ENCODE measurements at regions of chr20 and their contacts with region 1.

Region 1: GRCh38 chr20:1212607-1213396 is 9.5 kb downstream of the C20orf202 start:
- DNase-seq: peak; percentile 74
- H3K4me3 Mint-ChIP-seq: no peak overlapping the region
- H3K27ac Mint-ChIP-seq: no peak overlapping the region
- H3K4me1 Mint-ChIP-seq: peaks cover 20% of the 10 kb centered on the region
- H3K27me3 Mint-ChIP-seq: peaks cover 58% of the 10 kb centered on the region
- CTCF ChIP-seq: peak; percentile 78

Region 2: DNA sequence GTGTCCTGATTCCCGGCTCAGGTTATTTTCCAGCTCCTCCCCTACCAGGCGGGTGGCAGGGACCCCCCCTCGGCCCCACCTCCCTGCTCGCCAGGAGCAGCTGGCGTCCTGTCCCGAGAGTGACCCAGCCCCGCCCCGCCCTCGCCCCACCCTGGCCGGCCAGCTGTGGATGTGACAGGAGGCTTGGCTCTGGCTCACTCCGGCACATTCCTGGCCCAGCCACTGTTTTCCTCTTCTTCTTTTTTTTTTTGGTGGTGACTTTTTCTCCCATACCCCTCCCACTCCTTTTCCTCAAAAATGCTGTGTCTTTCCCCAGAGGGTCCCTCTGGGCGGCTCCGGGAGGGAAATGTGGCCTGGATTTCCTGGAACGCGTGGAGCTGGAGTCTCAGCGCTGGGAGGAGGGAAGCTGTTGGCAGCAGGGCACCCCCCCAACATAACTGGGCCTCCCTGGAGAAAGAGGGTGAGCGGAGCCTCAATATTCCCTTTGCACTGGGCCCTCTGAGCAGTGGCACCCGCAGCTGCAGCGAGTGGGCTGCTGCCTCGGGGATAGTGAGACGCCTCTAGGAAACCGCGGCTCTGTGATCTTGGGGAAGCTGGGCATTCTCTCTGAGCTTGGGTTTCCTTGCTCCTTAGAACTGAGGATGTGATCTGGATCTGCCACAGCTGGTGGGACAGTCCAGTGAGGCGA is 640.9 kb before region 1 on chr20:
- CTCF ChIA-PET with region 1: no interaction called
- POLR2A ChIA-PET with region 1: no interaction called
- intact Hi-C with region 1: no loop called
- DNase-seq: no peak
- H3K4me3 Mint-ChIP-seq: no peak overlapping the region
- H3K27ac Mint-ChIP-seq: no peak overlapping the region
- H3K4me1 Mint-ChIP-seq: peaks cover 12% of the 10 kb centered on the region
- H3K27me3 Mint-ChIP-seq: peaks cover 59% of the 10 kb centered on the region
- CTCF ChIP-seq: no peak

Region 3: GRCh38 chr20:1185790-1186334 is 26.9 kb before region 1 on chr20:
- CTCF ChIA-PET with region 1: interaction called, 14 read pairs
- POLR2A ChIA-PET with region 1: interaction called, 10 read pairs
- intact Hi-C with region 1: no loop called
- DNase-seq: peak; percentile 40
- H3K4me3 Mint-ChIP-seq: peak overlapping the region; percentile 45
- H3K27ac Mint-ChIP-seq: no peak overlapping the region
- H3K4me1 Mint-ChIP-seq: no peaks in the 10 kb centered on the region
- H3K27me3 Mint-ChIP-seq: peaks cover 28% of the 10 kb centered on the region
- CTCF ChIP-seq: peak; percentile 72

Region 4: DNA sequence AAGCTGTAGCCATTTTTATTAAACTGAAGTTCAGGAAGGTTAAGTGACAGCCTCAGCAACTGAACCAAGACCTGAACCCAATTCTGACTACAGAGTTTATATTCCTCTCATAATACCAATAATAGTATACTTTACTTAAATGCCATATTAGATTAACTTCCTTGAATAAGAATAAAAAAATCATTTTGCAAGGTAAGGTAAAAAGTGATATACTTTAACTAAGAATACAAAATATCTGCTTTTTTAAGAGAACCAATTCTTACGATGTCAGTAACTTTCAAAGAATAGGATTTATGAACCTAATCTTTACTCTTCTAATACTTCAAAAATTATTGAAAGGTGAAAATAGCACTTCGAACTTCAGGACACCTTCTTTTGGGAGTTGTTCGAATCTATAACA is 16.7 kb after region 1 on chr20:
- CTCF ChIA-PET with region 1: interaction called, 13 read pairs
- POLR2A ChIA-PET with region 1: interaction called, 4 read pairs
- intact Hi-C with region 1: no loop called
- DNase-seq: no peak
- H3K4me3 Mint-ChIP-seq: no peak overlapping the region
- H3K27ac Mint-ChIP-seq: no peak overlapping the region
- H3K4me1 Mint-ChIP-seq: no peaks in the 10 kb centered on the region
- H3K27me3 Mint-ChIP-seq: peaks cover 27% of the 10 kb centered on the region
- CTCF ChIP-seq: no peak

Region 5: GRCh38 chr20:1784586-1784985 is 571.8 kb after region 1 on chr20:
- CTCF ChIA-PET with region 1: no interaction called
- POLR2A ChIA-PET with region 1: no interaction called
- intact Hi-C with region 1: no loop called
- DNase-seq: no peak
- H3K4me3 Mint-ChIP-seq: no peak overlapping the region
- H3K27ac Mint-ChIP-seq: no peak overlapping the region
- H3K4me1 Mint-ChIP-seq: no peaks in the 10 kb centered on the region
- H3K27me3 Mint-ChIP-seq: peaks cover 47% of the 10 kb centered on the region
- CTCF ChIP-seq: no peak